ENCODE measurements at regions of chr5 and their contacts with region 1.

Region 1: DNA sequence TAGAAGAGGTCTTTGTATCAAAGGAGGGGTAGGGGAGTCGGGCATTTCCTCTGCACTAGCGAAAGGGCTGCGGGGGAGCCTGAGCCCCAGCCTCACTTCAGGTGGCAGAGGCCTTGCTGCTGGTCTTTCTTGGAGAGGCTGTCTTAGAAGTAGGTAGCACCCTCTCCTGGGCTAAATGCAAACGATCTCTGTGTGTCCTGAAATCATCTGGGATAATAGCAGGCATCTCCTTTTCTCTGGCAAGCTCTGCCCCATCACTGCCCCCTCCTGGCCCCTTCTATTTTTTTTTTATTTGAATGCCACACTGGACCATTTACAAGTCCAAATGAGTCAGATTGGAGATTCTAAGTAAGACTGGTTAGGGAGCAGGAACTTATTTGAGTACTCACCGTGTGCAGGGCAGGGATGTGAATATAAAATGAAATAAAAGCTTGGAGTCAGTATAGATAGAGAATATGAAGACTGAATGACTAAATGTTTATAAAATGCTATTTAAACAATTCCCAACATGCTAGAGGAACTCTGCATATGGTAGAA is 137.1 kb downstream of the FGF1 start:
- DNase-seq: peak in 5 of 10 donors; percentile 12 to 85 (median 36)

Region 2: DNA sequence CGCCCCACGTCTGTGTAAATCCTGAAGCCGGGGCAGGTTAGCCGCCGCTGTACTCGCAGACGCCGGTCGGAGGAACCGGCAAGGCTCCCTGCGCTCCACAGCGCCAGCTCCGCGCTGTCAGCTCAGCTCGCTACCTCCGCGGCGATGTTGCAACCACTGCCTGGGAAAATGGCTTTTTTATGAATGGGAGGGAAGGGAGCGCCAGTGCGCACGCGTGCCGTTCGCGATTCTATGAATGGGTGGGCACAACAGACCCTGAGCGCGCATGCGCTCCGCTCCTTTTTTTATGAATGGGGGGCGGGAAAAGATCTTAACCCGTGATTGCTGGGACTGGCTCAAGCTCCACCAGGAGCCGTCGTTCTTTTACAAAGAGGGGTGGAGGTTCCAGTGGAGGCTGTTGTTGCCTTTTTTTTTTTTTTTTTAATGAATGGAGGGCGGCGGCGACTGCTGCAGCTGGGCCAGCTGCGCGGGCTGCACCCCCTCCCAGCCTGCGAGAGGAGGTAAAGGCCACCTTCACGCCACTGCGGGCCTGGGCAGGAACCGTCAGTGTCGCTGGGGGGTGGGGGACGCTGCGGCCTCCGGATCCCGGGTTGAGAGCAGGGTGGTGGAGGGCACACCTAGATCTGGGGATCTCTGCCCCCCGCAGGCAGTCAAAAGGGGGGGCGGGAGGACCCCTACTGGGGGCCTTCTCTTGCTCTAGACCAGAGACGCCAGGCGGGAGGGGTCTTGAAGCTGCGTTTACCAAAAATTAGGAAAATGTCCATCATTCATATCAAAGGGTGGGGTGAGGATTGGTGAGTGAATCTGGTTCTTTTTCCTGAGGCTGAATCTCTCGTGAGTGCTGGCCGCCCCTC is 223.7 kb before region 1 on chr5 and contains the start of gene SPRY4:
- intact Hi-C with region 1: loop called (anchors 10 kb)
- DNase-seq: peak; percentile 75 to 98 (median 90)

Region 3: DNA sequence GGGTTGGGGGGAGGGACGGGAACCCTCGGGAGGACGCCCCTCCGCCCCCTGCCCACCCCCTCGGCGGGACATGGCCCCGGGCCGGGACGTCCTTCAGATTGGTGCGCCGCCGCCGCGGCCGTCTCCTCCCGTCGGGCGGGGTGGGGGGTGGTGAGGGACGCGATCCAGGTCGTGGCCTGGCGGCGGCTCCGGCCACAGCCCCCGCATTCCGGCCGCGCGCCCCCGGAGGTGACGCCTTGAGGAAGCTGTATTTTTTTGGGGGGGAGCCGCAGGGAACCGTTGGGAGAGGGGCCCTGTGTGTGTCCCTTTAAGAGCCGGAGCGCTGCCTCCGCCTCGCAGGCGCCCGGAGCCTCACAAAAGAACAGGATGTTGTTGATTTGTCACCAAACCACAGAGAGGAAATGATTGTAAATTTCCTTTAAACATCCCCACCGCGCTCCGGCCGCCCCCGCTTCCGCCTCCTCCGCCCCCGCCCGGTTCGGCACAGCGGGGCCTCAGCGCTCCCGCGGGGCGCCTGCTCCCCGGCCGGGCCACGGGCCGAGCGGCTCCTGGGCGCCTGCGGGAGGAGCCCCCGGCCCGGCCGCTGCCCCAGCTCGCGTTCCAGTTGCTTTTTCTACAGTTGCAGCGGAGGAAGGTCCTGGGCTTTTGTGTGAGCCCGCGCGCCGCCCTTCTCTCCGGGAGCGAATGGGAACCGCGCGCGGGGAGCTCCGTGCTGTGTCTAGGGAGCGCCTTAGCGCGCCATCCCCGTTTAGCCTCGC is 191.9 kb before region 1 on chr5:
- intact Hi-C with region 1: loop called (anchors 10 kb)
- DNase-seq: peak; percentile 39 to 96 (median 71)